MCF 10A (cell line): ENCODE measurements at regions of chr3 and their contacts with region 1.

Region 1: DNA sequence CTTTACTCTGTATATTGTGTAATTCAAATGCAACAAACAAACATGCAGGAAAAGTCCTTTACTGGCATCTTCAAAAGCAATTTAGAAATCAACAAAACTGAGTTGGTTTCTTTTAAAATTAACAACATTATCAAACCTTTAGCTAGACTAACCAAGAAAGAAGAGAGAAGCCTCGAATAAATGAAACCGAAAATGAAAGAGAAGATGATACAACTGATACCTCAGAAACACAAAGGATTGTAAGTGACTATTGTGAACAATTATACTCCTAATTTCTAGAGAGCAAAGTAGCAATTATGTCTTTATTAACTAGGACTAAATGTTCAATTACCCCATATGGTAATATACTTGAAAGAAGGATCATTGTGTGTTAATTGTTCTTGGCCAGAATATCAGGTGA is 49.2 kb upstream of the P3H2 start:
- DNase-seq: no peak
- H3K4me3 Mint-ChIP-seq: peak overlapping the region; percentile 33
- H3K27ac Mint-ChIP-seq: peak overlapping the region; percentile 9
- H3K4me1 Mint-ChIP-seq: peaks cover 7% of the 10 kb centered on the region
- H3K27me3 Mint-ChIP-seq: no peaks in the 10 kb centered on the region
- CTCF ChIP-seq: no peak

Region 2: GRCh38 chr3:190183121-190183520 is 13.2 kb after region 1 on chr3:
- CTCF ChIA-PET with region 1: interaction called, 5 read pairs
- POLR2A ChIA-PET with region 1: interaction called, 10 read pairs
- intact Hi-C with region 1: no loop called
- DNase-seq: peak; percentile 84
- H3K4me3 Mint-ChIP-seq: no peak overlapping the region
- H3K27ac Mint-ChIP-seq: peak overlapping the region; percentile 91
- H3K4me1 Mint-ChIP-seq: peaks cover 32% of the 10 kb centered on the region
- H3K27me3 Mint-ChIP-seq: no peaks in the 10 kb centered on the region
- CTCF ChIP-seq: no peak

Region 3: GRCh38 chr3:190217081-190217480 is 47.2 kb after region 1 on chr3:
- CTCF ChIA-PET with region 1: no interaction called
- POLR2A ChIA-PET with region 1: no interaction called
- intact Hi-C with region 1: no loop called
- DNase-seq: peak; percentile 73
- H3K4me3 Mint-ChIP-seq: no peak overlapping the region
- H3K27ac Mint-ChIP-seq: no peak overlapping the region
- H3K4me1 Mint-ChIP-seq: no peaks in the 10 kb centered on the region
- H3K27me3 Mint-ChIP-seq: no peaks in the 10 kb centered on the region
- CTCF ChIP-seq: no peak